GM12878 (cell line): ENCODE measurements at regions of chr2 and their contacts with region 1.

Region 1: GRCh38 chr2:174688079-174688478 is 76.2 kb downstream of the CHRNA1 start:
- DNase-seq: no peak
- ATAC-seq: peak; percentile 70
- H3K4me3 ChIP-seq: no peak overlapping the region
- H3K27ac ChIP-seq: no peak overlapping the region
- H3K4me1 ChIP-seq: peaks cover 2% of the 10 kb centered on the region
- H3K27me3 ChIP-seq: peaks cover 0 to 2% of the 10 kb centered on the region in 2 experiments; a peak in 1 of 4 replicates
- CTCF ChIP-seq: peak; percentile 26 to 56 (median 42); a peak in 5 of 6 replicates
- EP300 ChIP-seq: no peak
- POLR2A ChIP-seq: no peak
- RAD21 ChIP-seq: peak; percentile 50; the same call in 1 of the 2 replicates

Region 2: GRCh38 chr2:174546581-174547506 is 141.2 kb before region 1 on chr2:
- CTCF ChIA-PET with region 1: interaction called, 8 read pairs
- POLR2A ChIA-PET with region 1: no interaction called
- RAD21 ChIA-PET with region 1: interaction called, 7 read pairs
- SMC1A ChIA-PET with region 1: interaction called, 21 read pairs
- in situ Hi-C with region 1: no loop called
- intact Hi-C with region 1: no loop called
- DNase-seq: no peak
- ATAC-seq: peak; percentile 85
- H3K4me3 ChIP-seq: no peak overlapping the region
- H3K27ac ChIP-seq: no peak overlapping the region
- H3K4me1 ChIP-seq: no peaks in the 10 kb centered on the region
- H3K27me3 ChIP-seq: no peaks in the 10 kb centered on the region
- CTCF ChIP-seq: peak; percentile 52 to 71 (median 55); a peak in 5 of 6 replicates
- EP300 ChIP-seq: no peak
- POLR2A ChIP-seq: no peak
- RAD21 ChIP-seq: peak; percentile 84

Region 3: GRCh38 chr2:174568425-174568824 is 119.7 kb before region 1 on chr2:
- CTCF ChIA-PET with region 1: interaction called, 149 read pairs
- POLR2A ChIA-PET with region 1: no interaction called
- RAD21 ChIA-PET with region 1: interaction called, 3 read pairs
- SMC1A ChIA-PET with region 1: interaction called, 10 read pairs
- in situ Hi-C with region 1: no loop called
- intact Hi-C with region 1: no loop called
- DNase-seq: no peak
- ATAC-seq: peak; percentile 58
- H3K4me3 ChIP-seq: no peak overlapping the region
- H3K27ac ChIP-seq: no peak overlapping the region
- H3K4me1 ChIP-seq: peaks cover 5% of the 10 kb centered on the region; the same call in 1 of the 2 replicates
- H3K27me3 ChIP-seq: no peaks in the 10 kb centered on the region
- CTCF ChIP-seq: no peak
- EP300 ChIP-seq: no peak
- POLR2A ChIP-seq: no peak
- RAD21 ChIP-seq: no peak

Region 4: DNA sequence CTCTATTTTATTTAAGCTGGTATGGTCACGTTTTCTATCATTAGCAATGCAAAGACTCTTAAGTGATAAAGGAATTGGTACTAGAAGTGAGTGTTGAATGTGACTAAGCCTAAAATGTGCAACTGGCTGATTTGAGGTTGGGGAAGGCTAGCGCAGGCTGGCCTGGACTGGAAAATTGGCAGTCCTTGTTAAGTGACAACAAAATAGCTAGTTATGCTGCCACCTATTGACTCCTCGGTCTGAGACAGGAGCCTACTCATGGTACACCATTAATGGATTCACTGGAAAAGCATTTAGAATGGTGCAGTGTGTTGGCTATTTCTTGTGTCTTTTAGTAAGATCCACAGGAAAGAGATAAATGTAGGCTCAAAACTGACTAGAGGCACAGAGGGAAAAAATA is 84.8 kb before region 1 on chr2:
- CTCF ChIA-PET with region 1: interaction called, 534 read pairs
- POLR2A ChIA-PET with region 1: interaction called, 30 read pairs
- RAD21 ChIA-PET with region 1: interaction called, 294 read pairs
- SMC1A ChIA-PET with region 1: interaction called, 537 read pairs
- in situ Hi-C with region 1: loop called (anchors 25 kb)
- intact Hi-C with region 1: loop called (anchors 1 kb)
- DNase-seq: no peak
- ATAC-seq: peak; percentile 48
- H3K4me3 ChIP-seq: no peak overlapping the region
- H3K27ac ChIP-seq: no peak overlapping the region
- H3K4me1 ChIP-seq: peaks cover 44% of the 10 kb centered on the region
- H3K27me3 ChIP-seq: no peaks in the 10 kb centered on the region
- CTCF ChIP-seq: peak; percentile 66 to 76 (median 70)
- EP300 ChIP-seq: no peak
- POLR2A ChIP-seq: no peak
- RAD21 ChIP-seq: peak; percentile 68

Region 5: DNA sequence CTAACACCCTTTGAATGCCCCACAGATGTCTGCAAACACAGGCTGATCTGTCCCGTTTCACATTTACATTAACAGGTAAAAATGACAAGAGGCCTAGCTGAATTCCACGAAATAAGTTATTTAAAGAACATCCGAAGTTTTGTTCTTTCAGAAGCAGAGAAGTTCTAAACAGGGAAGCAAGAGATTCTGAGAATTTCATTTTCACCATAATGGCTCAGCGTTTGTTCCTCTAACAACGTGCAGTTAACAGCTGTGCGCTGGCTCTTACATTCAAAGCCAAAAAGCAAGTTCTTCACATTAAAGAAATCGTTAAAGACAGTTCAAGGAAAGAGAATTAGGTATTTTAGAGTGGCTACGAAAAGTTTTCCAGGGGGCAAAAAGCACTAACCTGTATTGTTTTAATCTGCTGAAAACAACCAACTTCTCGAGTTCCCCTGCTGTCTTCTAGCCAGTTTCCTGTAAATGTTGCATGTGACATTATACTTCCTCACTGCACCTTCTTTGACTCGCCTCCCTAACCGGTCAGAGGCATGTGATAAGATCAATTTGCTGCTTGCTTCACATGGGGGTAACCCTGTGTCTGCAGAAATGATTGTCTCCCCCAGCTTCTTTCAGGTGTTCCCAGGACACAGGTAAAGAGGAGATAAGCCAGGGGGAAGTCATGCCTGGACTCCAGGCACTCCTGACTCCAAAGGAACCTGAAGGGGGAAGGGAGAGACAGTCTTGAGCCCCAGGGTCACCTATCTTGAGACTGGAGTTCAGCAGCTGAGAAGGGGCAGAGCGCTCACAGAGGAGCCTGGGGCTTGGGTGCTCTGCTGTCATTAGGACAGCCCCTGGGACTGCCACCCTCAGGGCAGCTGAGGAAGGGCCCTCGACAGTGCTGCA is 53.7 kb before region 1 on chr2:
- CTCF ChIA-PET with region 1: interaction called, 76 read pairs
- POLR2A ChIA-PET with region 1: interaction called, 7 read pairs
- RAD21 ChIA-PET with region 1: interaction called, 42 read pairs
- SMC1A ChIA-PET with region 1: interaction called, 44 read pairs
- in situ Hi-C with region 1: no loop called
- intact Hi-C with region 1: loop called (anchors 2 kb)
- DNase-seq: peak; percentile 65
- ATAC-seq: peak; percentile 85
- H3K4me3 ChIP-seq: peak overlapping the region; percentile 84
- H3K27ac ChIP-seq: peak overlapping the region; percentile 91
- H3K4me1 ChIP-seq: peaks cover 22% of the 10 kb centered on the region
- H3K27me3 ChIP-seq: no peaks in the 10 kb centered on the region
- CTCF ChIP-seq: peak; percentile 35 to 47 (median 45); a peak in 5 of 6 replicates
- EP300 ChIP-seq: no peak
- POLR2A ChIP-seq: peak; percentile 60
- RAD21 ChIP-seq: no peak

Region 6: GRCh38 chr2:174673876-174674275 is 14.2 kb before region 1 on chr2:
- CTCF ChIA-PET with region 1: interaction called, 17 read pairs
- POLR2A ChIA-PET with region 1: no interaction called
- RAD21 ChIA-PET with region 1: no interaction called
- SMC1A ChIA-PET with region 1: interaction called, 14 read pairs
- in situ Hi-C with region 1: no loop called
- intact Hi-C with region 1: no loop called
- DNase-seq: no peak
- ATAC-seq: no peak
- H3K4me3 ChIP-seq: no peak overlapping the region
- H3K27ac ChIP-seq: no peak overlapping the region
- H3K4me1 ChIP-seq: no peaks in the 10 kb centered on the region
- H3K27me3 ChIP-seq: no peaks in the 10 kb centered on the region
- CTCF ChIP-seq: no peak
- EP300 ChIP-seq: no peak
- POLR2A ChIP-seq: no peak
- RAD21 ChIP-seq: no peak

Region 7: GRCh38 chr2:174797781-174798276 is 109.8 kb after region 1 on chr2:
- CTCF ChIA-PET with region 1: no interaction called
- POLR2A ChIA-PET with region 1: no interaction called
- RAD21 ChIA-PET with region 1: no interaction called
- SMC1A ChIA-PET with region 1: no interaction called
- in situ Hi-C with region 1: no loop called
- intact Hi-C with region 1: no loop called
- DNase-seq: no peak
- ATAC-seq: no peak
- H3K4me3 ChIP-seq: no peak overlapping the region
- H3K27ac ChIP-seq: no peak overlapping the region
- H3K4me1 ChIP-seq: no peaks in the 10 kb centered on the region
- H3K27me3 ChIP-seq: no peaks in the 10 kb centered on the region; a peak in 1 of 4 replicates
- CTCF ChIP-seq: no peak
- EP300 ChIP-seq: no peak
- POLR2A ChIP-seq: no peak
- RAD21 ChIP-seq: no peak